Adrenal gland (tissue), 19 donors: ENCODE measurements at regions of chr10 and their contacts with region 1.

Region 1: DNA sequence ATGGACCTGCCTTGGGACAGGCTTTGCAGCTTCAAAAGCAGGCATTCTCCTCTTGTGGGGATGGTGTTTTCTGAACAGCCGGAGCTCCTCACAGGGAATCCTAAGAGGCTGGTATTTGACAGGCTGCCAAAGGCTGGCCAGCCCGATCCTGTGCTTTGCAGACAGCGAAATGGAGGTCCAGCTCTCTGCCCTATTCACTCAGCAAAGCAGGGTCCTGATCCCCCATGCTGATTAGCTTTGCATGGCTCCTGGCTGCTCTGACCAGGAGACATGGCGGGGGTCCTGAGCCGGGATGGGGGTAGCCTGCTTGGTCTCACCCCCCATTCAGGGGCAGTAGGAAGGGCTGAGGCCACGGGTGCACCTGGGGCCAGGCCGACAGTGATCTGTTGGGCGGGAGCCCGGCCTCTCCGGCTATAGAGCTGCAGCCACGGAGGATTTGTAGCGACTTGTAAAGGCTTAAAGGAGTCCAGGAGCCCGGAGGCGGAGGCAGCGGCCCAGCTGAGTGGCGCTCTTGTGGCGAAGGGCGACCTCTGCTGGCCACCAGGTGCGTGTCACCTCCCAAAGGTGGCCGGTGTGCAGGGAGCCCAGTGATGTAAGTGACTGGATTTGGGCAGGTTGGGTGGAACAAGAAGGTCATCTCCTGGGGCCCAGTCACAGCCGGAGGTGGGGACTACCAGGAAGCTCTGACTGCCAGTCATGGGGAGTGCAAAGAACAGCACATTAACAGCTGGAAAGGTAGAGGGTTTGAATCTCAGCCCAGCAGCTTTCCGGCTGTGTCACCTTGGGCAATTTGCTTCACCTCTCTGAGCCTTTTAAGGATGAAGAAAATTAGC is 126.5 kb downstream of the ZMIZ1 start:
- DNase-seq: peak; percentile 85 to 96 (median 91)
- H3K4me3 ChIP-seq: no peak overlapping the region
- H3K27ac ChIP-seq: peak overlapping the region; percentile 7 to 72 (median 69)
- H3K4me1 ChIP-seq: peaks cover 11 to 38% of the 10 kb centered on the region in 2 donors
- H3K27me3 ChIP-seq: no peaks in the 10 kb centered on the region
- CTCF ChIP-seq: peak; percentile 86 to 98 (median 96)
- POLR2A ChIP-seq: no peak

Region 2: GRCh38 chr10:78053211-78053868 is 1142.0 kb before region 1 on chr10:
- intact Hi-C with region 1: loop called (anchors 5 to 10 kb)
- DNase-seq: peak in 1 of 7 donors; percentile 57
- H3K4me3 ChIP-seq: no peak overlapping the region
- H3K27ac ChIP-seq: no peak overlapping the region
- H3K4me1 ChIP-seq: no peaks in the 10 kb centered on the region
- H3K27me3 ChIP-seq: no peaks in the 10 kb centered on the region
- CTCF ChIP-seq: no peak
- POLR2A ChIP-seq: no peak

Region 3: DNA sequence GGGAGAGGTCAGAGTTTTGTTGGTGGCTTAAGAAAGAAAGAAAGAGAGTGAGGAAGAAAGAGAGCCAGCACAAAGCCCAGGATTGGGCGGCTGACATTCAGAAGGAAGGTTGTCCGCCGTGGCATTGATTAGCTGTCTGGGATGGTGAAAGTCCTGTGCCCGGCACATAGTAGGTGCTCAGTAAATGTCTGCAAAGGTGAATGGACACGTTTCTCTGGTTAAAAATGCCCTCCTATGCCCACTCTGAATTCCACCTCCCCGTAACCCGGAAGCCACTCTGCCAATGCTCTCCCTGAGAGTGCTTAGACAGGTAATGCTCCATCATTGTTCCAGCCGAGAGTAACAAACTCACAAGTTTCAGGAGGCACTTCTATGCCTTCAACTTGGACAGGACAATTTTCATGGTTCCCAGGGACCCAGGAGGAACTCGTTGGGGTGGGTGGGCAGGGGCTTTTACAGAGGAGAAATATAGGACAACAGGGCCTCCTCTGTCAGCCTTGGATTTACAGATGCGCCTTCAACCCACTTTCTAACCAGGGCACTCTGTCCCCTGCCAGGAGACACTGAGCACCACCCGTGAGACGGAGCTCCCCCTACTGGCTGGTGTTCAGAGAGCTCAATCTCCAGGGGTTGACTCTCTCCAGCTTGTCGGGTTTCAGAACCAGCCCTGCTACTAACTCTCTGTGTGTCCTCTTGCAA is 538.0 kb before region 1 on chr10:
- intact Hi-C with region 1: loop called in 1 of 2 experiments (anchors 10 kb)
- DNase-seq: peak; percentile 75 to 91 (median 84)
- H3K4me3 ChIP-seq: no peak overlapping the region
- H3K27ac ChIP-seq: no peak overlapping the region
- H3K4me1 ChIP-seq: no peaks in the 10 kb centered on the region
- H3K27me3 ChIP-seq: no peaks in the 10 kb centered on the region
- CTCF ChIP-seq: peak; percentile 57 to 82 (median 66)
- POLR2A ChIP-seq: no peak

Region 4: GRCh38 chr10:78953113-78953798 is 242.1 kb before region 1 on chr10:
- intact Hi-C with region 1: loop called in 1 of 2 experiments (anchors 10 kb)
- DNase-seq: peak; percentile 46 to 82 (median 72)
- H3K4me3 ChIP-seq: no peak overlapping the region
- H3K27ac ChIP-seq: peak overlapping the region in 3 of 5 donors; percentile 6 to 50 (median 31)
- H3K4me1 ChIP-seq: peaks cover 7 to 15% of the 10 kb centered on the region in 2 donors
- H3K27me3 ChIP-seq: no peaks in the 10 kb centered on the region
- CTCF ChIP-seq: no peak
- POLR2A ChIP-seq: no peak